ENCODE measurements at regions of chr4 and their contacts with region 1.

Region 1: GRCh38 chr4:90852237-90852636 is 725.0 kb downstream of the CCSER1 start:
- DNase-seq: no peak
- ATAC-seq: peak; percentile 32; the same call in 1 of the 3 replicates
- H3K4me3 ChIP-seq: no peak overlapping the region
- H3K27ac ChIP-seq: no peak overlapping the region
- H3K4me1 ChIP-seq: peaks cover 2% of the 10 kb centered on the region
- H3K27me3 ChIP-seq: no peaks in the 10 kb centered on the region
- CTCF ChIP-seq: no peak
- EP300 ChIP-seq: no peak
- POLR2A ChIP-seq: no peak
- RAD21 ChIP-seq: no peak

Region 2: GRCh38 chr4:89294573-89295269 is 1557.5 kb before region 1 on chr4:
- CTCF ChIA-PET with region 1: no interaction called
- POLR2A ChIA-PET with region 1: no interaction called
- in situ Hi-C with region 1: no loop called
- intact Hi-C with region 1: no loop called
- DNase-seq: no peak
- ATAC-seq: no peak
- H3K4me3 ChIP-seq: no peak overlapping the region
- H3K27ac ChIP-seq: no peak overlapping the region
- H3K4me1 ChIP-seq: 0 out of 2 replicates have a peak, but pooled peaks cover 7% of the 10 kb centered on the region
- H3K27me3 ChIP-seq: no peaks in the 10 kb centered on the region
- CTCF ChIP-seq: no peak
- EP300 ChIP-seq: no peak
- POLR2A ChIP-seq: no peak
- RAD21 ChIP-seq: no peak

Region 3: DNA sequence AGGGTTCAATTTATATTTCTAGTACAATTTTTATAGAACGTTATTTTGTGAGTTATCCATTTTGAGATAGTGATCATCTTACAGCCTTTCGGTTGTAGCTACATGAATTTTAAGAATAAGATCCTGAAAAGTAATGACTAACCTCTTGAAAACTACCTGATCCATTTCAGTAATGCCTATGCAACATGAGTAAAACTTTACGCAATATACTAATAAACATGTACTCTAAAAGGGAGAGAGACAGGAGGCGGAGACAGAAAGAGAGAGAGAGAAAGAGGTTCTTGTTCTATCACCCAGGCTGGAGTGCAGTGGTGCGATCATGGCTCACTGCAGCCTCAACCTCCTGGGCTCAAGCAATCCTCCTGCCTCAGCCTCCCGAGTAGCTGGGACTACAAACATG is 91.1 kb after region 1 on chr4:
- CTCF ChIA-PET with region 1: no interaction called
- POLR2A ChIA-PET with region 1: no interaction called
- in situ Hi-C with region 1: no loop called
- intact Hi-C with region 1: loop called (anchors 10 kb)
- DNase-seq: no peak
- ATAC-seq: no peak
- H3K4me3 ChIP-seq: no peak overlapping the region
- H3K27ac ChIP-seq: no peak overlapping the region
- H3K4me1 ChIP-seq: no peaks in the 10 kb centered on the region
- H3K27me3 ChIP-seq: no peaks in the 10 kb centered on the region
- CTCF ChIP-seq: no peak
- EP300 ChIP-seq: no peak
- POLR2A ChIP-seq: no peak
- RAD21 ChIP-seq: no peak